ENCODE measurements at regions of chr14 and their contacts with region 1.

Region 1: GRCh38 chr14:23320774-23321571 is at the start of gene PABPN1:
- DNase-seq: peak; percentile 94 to 99 (median 99)
- H3K4me3 ChIP-seq: peak within 1 kb of the TSS; percentile 79
- H3K4me3 Mint-ChIP-seq: peak within 1 kb of the TSS; percentile 91 to 99 (median 93)
- H3K27ac ChIP-seq: peak within 1 kb of the TSS; percentile 83
- H3K27ac Mint-ChIP-seq: peak within 1 kb of the TSS; percentile 91 to 99 (median 98)
- H3K4me1 ChIP-seq: peaks cover 23% of the 10 kb centered on the region
- H3K4me1 Mint-ChIP-seq: peaks cover 29 to 35% (median 30%) of the 10 kb centered on the region in 3 donors
- H3K27me3 ChIP-seq: no peaks in the 10 kb centered on the region
- H3K27me3 Mint-ChIP-seq: peaks cover 3 to 9% of the 10 kb centered on the region in 2 donors
- total RNA-seq, gene PABPN1: 308 TPM

Region 2: DNA sequence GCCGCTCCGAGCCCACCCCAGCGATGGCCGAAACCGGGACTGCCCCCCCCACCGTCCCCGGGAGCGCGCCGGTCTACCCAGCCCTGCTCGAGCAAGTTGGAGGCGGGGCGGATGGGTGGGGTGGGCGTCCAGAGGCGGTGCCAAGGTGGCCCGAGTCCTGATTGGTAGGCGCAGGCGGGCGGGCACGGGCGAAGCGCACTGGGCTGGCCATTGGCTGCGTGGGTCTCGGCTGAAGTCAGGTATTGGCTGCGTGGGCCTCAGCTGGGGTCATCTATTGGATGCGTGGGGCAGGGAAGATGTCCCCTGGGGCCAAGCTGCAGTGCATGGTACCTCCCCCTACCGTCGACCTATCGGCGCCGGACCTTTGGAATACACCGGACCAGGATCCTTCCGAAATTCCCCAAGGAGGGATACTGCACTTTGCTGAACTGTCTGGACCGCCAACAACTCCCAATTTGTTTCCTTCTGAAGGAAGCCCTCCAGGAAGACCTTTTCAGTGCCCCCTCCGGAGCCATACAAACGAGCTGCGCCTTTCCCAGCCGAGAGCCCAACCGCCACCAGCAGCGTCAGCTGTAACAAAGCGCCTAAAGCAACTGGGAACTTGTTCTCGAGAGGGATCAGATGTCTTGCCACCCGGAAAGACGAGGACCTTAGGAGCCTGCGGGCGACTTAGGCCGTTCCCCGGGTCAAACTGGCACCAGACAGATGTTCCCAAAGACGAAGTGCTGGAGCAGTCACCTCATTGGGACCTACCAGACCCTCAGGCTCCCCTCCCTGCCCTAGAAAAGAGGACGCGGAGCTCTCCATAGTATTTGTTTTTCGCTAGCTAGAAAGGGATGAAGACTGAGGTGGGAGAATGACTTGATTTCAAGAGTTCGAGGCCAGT is 34.7 kb before region 1 on chr14 and contains the start of gene HOMEZ:
- CTCF ChIA-PET with region 1: interaction called, 6 read pairs
- POLR2A ChIA-PET with region 1: interaction called, 23 read pairs
- DNase-seq: peak; percentile 94 to 98 (median 98)
- H3K4me3 ChIP-seq: peak within 1 kb of the TSS; percentile 82
- H3K4me3 Mint-ChIP-seq: peak within 1 kb of the TSS; percentile 94 to 100 (median 95)
- H3K27ac ChIP-seq: peak within 1 kb of the TSS; percentile 82
- H3K27ac Mint-ChIP-seq: peak within 1 kb of the TSS; percentile 79 to 99 (median 97)
- H3K4me1 ChIP-seq: peaks cover 13% of the 10 kb centered on the region
- H3K4me1 Mint-ChIP-seq: peaks cover 25 to 44% (median 36%) of the 10 kb centered on the region in 3 donors
- H3K27me3 ChIP-seq: no peaks in the 10 kb centered on the region
- H3K27me3 Mint-ChIP-seq: no peaks in the 10 kb centered on the region
- total RNA-seq, gene HOMEZ: 12.8 to 13.4 TPM

Region 3: DNA sequence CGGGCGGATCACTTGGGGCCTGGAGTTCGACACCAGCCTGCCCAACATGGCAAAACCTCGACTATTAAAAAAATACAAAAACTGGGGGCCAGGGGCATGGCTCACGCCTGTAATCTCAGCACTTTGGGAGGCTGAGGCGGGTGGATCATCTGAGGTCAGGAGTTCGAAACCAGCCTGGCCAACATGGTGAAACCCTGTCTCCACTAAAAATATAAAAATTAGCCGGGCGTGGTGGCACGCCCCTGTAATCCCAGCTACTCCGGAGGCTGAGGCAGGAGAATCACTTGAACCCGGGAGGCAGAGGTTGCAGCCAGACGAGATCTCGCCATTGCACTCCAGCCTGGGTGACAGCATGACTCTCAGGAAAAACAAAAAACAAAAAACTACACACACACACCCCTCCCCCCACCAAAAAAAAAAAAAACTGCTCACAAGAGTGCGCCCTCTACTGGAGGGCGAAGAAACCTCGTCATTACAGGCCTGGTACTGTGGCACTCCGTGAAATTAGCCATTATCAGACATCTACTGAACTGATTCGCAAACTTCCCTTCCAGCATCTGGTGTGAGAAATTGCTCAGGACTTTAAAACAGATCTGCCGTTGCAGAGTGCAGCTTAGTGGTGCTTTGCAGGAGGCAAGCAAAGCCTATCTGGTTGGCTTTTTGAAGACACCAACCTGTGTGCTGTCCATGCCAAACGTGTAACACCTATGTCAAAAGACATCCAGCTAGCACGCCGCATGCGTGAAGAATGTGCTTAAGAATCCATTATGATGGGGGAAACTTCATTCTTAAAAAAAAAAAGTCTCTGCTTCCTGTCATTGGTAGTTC is 26.0 kb before region 1 on chr14:
- CTCF ChIA-PET with region 1: interaction called, 29 read pairs
- POLR2A ChIA-PET with region 1: interaction called, 146 read pairs
- DNase-seq: peak; percentile 36 to 68 (median 61)
- H3K4me3 ChIP-seq: no peak overlapping the region
- H3K4me3 Mint-ChIP-seq: peak overlapping the region in 6 of 7 donors; percentile 1 to 77 (median 34)
- H3K27ac ChIP-seq: no peak overlapping the region
- H3K27ac Mint-ChIP-seq: peak overlapping the region; percentile 25 to 95 (median 68)
- H3K4me1 ChIP-seq: peaks cover 16% of the 10 kb centered on the region
- H3K4me1 Mint-ChIP-seq: peaks cover 10 to 22% (median 16%) of the 10 kb centered on the region in 3 donors
- H3K27me3 ChIP-seq: no peaks in the 10 kb centered on the region
- H3K27me3 Mint-ChIP-seq: peaks cover 0 to 2% of the 10 kb centered on the region in 2 donors

Region 4: DNA sequence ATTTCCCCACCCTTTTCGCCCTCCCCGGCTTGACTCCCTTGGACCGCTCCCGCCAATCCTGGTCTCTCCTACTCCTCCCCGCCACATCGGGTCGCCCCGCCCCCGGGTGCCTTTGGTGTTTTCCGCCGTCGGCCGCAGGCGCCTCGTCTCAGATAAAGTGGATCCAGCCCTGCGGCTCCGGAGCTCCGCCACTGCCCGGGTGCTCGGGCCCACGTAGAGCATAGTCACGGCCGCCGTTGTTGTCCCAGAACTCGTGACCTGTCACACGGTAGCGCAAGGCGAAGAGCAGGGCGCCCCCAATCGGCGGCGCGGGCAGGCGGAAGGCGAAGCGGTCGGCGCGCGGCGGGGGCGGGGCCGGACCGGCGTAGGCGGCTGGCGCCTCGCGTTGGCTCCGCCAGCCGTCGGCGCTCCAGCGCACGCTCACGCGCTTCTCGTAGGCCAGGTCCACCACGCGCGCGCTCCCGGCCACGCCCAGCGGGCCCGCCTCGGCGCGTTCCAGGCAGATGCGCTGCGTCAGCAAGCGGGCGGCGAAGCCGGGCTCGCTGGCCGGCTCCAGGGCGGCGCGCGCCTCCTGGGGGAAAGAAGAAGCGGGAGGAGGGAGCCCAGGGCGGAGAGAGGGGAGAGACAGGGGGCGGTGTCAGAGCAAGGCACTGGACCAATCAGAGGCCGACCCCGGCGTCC is 19.5 kb before region 1 on chr14:
- CTCF ChIA-PET with region 1: interaction called, 52 read pairs
- POLR2A ChIA-PET with region 1: interaction called, 146 read pairs
- DNase-seq: peak; percentile 93 to 99 (median 97)
- H3K4me3 ChIP-seq: peak overlapping the region; percentile 96
- H3K4me3 Mint-ChIP-seq: peak overlapping the region; percentile 86 to 98 (median 95)
- H3K27ac ChIP-seq: peak overlapping the region; percentile 96
- H3K27ac Mint-ChIP-seq: peak overlapping the region; percentile 91 to 99 (median 96)
- H3K4me1 ChIP-seq: peaks cover 21% of the 10 kb centered on the region
- H3K4me1 Mint-ChIP-seq: peaks cover 17 to 30% (median 28%) of the 10 kb centered on the region in 3 donors
- H3K27me3 ChIP-seq: peaks cover 3% of the 10 kb centered on the region
- H3K27me3 Mint-ChIP-seq: peaks cover 10 to 12% of the 10 kb centered on the region in 2 donors

Region 5: GRCh38 chr14:23379366-23380196 is 58.6 kb after region 1 on chr14:
- CTCF ChIA-PET with region 1: interaction called, 23 read pairs
- POLR2A ChIA-PET with region 1: no interaction called
- DNase-seq: peak; percentile 49 to 74 (median 56)
- H3K4me3 ChIP-seq: no peak overlapping the region
- H3K4me3 Mint-ChIP-seq: no peak overlapping the region
- H3K27ac ChIP-seq: no peak overlapping the region
- H3K27ac Mint-ChIP-seq: no peak overlapping the region
- H3K4me1 ChIP-seq: no peaks in the 10 kb centered on the region
- H3K4me1 Mint-ChIP-seq: no peaks in the 10 kb centered on the region
- H3K27me3 ChIP-seq: no peaks in the 10 kb centered on the region
- H3K27me3 Mint-ChIP-seq: peaks cover 13 to 25% of the 10 kb centered on the region in 2 donors

Region 6: DNA sequence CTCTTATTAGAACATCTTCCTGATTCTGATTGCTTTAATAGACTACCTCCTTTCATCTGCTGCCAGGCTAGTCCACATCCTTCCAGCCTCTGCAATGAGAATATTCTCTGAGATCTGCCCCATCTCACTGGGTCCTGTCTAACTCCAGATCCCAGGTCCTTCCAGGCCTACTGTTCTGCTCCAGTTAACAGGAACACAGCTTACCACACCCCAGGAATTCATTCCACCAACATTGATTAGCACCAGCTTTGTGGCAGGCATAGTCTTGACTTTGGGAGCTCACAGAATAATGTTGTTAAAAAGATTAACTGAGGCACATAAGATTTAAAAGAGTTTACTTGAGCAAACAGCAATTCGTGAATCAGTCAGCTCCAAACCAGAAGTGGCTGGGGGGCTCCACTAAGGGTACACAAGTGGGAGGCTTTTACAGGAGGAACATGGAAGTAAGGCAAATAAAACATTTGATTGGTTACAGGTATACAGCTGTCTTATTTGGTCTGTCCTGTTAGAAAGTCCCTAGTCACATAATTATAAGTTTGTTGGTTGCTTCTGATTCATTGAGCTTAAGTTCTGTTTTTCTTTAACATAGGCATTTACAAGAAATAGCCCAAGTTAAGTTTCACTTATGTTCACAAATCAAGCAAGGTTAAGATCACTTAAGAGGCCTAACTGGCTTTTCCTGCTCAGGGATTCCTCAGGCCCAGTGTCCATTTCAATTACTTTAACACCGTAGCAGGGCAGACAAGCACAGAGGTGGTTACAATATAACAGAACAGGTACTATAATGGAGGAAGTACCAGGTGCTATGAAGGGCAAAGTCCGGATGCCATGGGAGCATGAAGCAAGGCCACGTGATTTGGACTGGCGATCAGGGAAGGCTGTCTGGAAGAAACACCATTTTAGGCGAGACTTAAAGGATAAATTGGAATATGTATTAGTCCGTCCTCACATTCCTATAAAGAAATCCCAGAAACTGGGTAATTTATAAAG is 126.7 kb after region 1 on chr14:
- CTCF ChIA-PET with region 1: no interaction called
- POLR2A ChIA-PET with region 1: no interaction called
- DNase-seq: no peak
- H3K4me3 ChIP-seq: no peak overlapping the region
- H3K4me3 Mint-ChIP-seq: no peak overlapping the region
- H3K27ac ChIP-seq: no peak overlapping the region
- H3K27ac Mint-ChIP-seq: no peak overlapping the region
- H3K4me1 ChIP-seq: no peaks in the 10 kb centered on the region
- H3K4me1 Mint-ChIP-seq: no peaks in the 10 kb centered on the region
- H3K27me3 ChIP-seq: no peaks in the 10 kb centered on the region
- H3K27me3 Mint-ChIP-seq: peaks cover 5 to 34% of the 10 kb centered on the region in 2 donors